HEK293T (cell line): ENCODE measurements at regions of chr20 and their contacts with region 1.

Region 1: DNA sequence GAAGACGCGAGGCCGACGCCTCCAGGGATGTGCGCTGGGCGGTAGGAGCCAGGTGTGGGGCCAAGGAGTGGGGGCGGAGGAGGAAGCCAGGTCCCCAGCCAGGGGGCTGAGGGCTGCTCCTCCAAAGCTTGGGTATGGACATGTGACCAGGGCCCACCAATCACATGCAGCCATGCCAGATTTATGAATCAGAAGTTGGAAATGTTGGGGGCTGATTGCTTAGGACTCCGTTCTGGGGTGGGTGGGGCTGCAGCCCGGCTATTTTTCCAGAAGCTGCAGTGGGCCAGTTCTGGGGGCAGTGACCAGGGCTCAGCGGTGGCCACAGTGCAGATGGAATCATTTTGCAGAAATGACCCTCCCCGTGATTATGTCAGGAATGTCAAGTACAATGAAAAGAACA is 96.0 kb downstream of the CEBPB start:
- DNase-seq: peak; percentile 48

Region 2: GRCh38 chr20:50189681-50190582 is 96.7 kb before region 1 on chr20:
- CTCF ChIA-PET with region 1: no interaction called
- POLR2A ChIA-PET with region 1: interaction called, 24 read pairs
- DNase-seq: peak; percentile 92